Right lobe of liver (tissue), 6 donors: ENCODE measurements at regions of chr6 and their contacts with region 1.

Region 1: DNA sequence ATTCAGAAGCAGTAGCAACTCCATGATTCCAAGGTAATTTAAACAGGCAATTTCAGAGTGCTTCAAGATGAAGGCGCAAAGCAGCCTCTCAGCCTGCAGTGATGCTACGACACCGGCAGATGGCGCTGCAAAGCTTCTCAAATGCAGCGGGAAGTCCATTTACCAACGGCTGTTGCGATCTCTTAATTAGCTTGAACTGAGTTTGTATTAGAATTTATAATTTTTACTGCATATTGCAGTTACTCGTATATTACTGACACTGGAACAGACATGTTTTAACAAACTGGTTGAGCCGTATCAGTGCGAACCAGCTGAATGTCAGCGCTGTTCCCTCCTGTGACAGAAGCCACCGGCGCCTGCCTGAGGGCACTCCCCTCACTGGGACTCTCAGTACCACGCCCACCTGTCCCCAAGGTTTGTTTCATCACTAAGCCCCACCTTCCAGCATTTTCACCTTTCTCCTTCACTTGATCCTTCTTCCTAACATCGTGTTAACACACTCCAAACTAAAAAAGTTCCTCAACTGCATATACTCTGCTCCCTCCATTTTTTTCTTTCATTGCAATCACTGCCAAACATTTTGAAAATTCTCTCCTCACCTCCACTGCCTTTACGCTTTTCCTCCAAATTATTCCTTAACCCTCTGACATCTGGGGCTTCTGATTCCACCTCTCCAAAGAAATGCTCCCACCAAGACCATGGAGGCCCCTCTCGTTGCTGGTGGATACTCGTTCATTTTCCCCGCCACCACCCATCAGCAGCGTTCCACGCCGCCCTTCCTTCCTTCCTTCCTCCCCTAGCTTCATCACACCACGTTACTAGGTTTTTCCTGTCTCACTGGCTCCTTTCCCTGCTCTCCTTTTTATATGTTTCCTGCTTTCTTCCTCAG is 14.5 kb downstream of the GNL1 start:
- DNase-seq: peak; percentile 74 to 81 (median 75)
- ATAC-seq: peak; percentile 87 to 95 (median 88)
- H3K4me3 ChIP-seq: peak overlapping the region; percentile 11 to 31 (median 25)
- H3K27ac ChIP-seq: peak overlapping the region in 2 of 3 donors; percentile 3 to 40
- H3K4me1 ChIP-seq: peaks cover 0 to 4% (median 0%) of the 10 kb centered on the region in 4 donors
- H3K27me3 ChIP-seq: no peaks in the 10 kb centered on the region
- CTCF ChIP-seq: peak; percentile 91 to 99 (median 99)
- POLR2A ChIP-seq: no peak

Region 2: DNA sequence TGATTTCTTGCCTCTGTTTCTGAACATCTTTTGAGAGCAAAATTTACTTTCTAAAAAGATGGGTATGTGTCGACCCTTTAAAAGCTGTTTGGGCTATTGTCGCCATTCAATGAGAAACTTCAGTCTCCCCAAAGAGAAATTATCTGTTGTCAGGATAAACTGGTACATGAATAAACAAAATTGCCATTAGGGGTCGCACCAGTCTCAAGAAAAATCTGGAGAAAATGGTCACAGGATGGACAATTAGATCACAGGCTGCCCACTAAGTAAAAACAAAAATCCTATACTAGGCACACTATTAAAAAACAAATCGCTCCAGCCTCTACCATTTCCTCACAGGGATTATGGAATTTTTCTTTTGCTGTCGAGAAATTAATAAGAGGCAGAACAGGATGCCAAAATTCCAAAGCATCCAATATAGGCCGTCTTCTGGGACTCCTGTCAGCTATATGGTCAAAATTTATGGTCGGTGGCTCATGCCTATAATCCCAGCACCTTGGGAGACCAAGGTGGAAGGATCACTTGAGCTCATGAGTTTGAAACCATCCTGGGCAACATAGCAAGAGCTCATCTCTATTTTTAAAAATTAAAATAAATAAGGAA is 58.0 kb before region 1 on chr6:
- intact Hi-C with region 1: loop called (anchors 5 kb)
- DNase-seq: no peak
- ATAC-seq: peak; percentile 51 to 67 (median 62)
- H3K4me3 ChIP-seq: no peak overlapping the region
- H3K27ac ChIP-seq: no peak overlapping the region
- H3K4me1 ChIP-seq: no peaks in the 10 kb centered on the region
- H3K27me3 ChIP-seq: peaks cover 0 to 16% of the 10 kb centered on the region in 2 donors
- CTCF ChIP-seq: peak; percentile 52 to 82 (median 60)
- POLR2A ChIP-seq: no peak

Region 3: DNA sequence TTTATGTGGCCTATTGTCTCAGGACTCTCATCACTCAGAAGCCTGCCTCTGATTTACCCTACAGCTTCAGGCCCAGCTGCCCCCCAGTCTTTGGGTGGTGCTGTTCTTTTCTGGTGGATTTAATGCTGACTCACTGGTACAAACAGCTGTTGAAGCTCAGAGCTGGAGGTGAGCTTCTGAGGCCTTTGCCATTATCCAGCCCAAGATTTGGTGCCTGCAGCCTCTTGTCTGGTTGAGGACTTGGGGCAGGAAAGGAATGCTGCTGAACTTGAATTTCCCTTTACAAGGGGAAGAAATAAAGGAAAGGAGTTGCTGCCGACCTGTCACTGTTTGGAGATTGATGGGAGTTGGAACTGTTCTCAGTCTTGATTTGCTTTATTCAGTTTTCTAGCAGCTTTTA is 49.2 kb after region 1 on chr6:
- intact Hi-C with region 1: loop called (anchors 5 to 10 kb)
- DNase-seq: no peak
- ATAC-seq: peak in 1 of 4 donors; percentile 12
- H3K4me3 ChIP-seq: no peak overlapping the region
- H3K27ac ChIP-seq: no peak overlapping the region
- H3K4me1 ChIP-seq: no peaks in the 10 kb centered on the region
- H3K27me3 ChIP-seq: no peaks in the 10 kb centered on the region
- CTCF ChIP-seq: no peak
- POLR2A ChIP-seq: no peak